ENCODE measurements at regions of chr3 and their contacts with region 1.

Region 1: DNA sequence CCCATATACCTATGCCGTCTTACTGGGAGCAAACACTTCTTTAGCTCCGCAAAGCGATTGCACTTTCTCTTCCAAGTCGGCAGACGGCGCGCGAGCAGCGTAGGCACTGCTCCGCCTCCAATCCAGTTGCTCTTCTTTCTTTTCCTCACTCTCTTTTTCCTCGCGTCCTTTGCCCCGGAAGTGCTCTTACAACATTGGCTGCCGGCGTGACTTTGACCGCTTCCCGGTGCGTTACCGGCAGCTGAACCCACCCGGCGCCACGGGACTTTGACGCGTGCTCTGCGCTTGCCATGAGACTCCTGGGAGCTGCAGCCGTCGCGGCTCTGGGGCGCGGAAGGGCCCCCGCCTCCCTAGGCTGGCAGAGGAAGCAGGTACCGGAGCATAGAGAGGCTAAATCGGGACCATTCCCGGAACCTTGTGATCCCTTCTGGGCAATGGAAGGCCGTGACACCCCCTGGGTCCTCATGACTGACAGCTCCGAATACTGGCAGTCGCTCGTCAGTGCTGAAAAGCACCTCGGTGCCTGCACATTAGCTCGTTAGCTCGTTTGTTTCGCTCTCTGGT is at the start of gene GFM1:
- DNase-seq: peak; percentile 85 to 98 (median 95)

Region 2: GRCh38 chr3:158570999-158571974 is 73.1 kb before region 1 on chr3 and contains the start of gene MLF1:
- intact Hi-C with region 1: loop called (anchors 10 kb)
- DNase-seq: peak; percentile 94 to 99 (median 98)

Region 3: GRCh38 chr3:158801696-158802408 is 157.4 kb after region 1 on chr3 and contains the start of gene MFSD1:
- intact Hi-C with region 1: loop called (anchors 10 kb)
- DNase-seq: peak; percentile 90 to 99 (median 96)

Measured in head of caudate nucleus (tissue), 42 donors.